ENCODE measurements at regions of chr17 and their contacts with region 1.

Region 1: DNA sequence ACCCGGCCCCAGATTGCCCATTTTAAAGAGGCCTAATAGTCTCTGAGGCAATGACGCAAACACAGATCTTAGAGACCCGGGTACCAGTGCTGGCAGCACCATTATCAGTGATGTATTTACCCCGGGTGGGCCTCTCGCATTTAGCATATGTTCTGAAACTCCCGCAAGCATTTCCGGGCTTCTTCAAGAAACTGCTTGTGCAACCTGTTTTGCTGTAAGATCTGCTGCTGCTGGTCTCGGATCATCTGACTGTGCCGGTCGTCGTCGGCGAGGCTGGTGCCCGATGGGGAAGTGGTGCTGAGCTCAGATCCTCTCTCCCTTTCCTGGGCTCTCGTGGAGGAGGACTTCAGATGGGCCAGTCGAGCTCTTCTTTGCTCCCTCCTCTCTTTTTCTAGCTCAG is 12.5 kb downstream of the CEP295NL start:
- DNase-seq: peak; percentile 46
- ATAC-seq: peak; percentile 60
- H3K4me3 Mint-ChIP-seq: peak overlapping the region; percentile 60
- H3K27ac Mint-ChIP-seq: peak overlapping the region; percentile 94
- H3K4me1 Mint-ChIP-seq: peaks cover 59% of the 10 kb centered on the region
- H3K27me3 Mint-ChIP-seq: no peaks in the 10 kb centered on the region
- CTCF ChIP-seq: no peak

Region 2: GRCh38 chr17:78781948-78782916 is 108.3 kb before region 1 on chr17 and contains the start of gene CYTH1:
- CTCF ChIA-PET with region 1: no interaction called
- POLR2A ChIA-PET with region 1: no interaction called
- intact Hi-C with region 1: loop called (anchors 5 kb)
- DNase-seq: peak; percentile 98
- ATAC-seq: peak; percentile 80
- H3K4me3 Mint-ChIP-seq: peak within 1 kb of the TSS; percentile 92
- H3K27ac Mint-ChIP-seq: peak within 1 kb of the TSS; percentile 93
- H3K4me1 Mint-ChIP-seq: peaks cover 40% of the 10 kb centered on the region
- H3K27me3 Mint-ChIP-seq: no peaks in the 10 kb centered on the region
- CTCF ChIP-seq: no peak
- total RNA-seq, gene CYTH1: 368 and 391 TPM in 2 replicates

Region 3: DNA sequence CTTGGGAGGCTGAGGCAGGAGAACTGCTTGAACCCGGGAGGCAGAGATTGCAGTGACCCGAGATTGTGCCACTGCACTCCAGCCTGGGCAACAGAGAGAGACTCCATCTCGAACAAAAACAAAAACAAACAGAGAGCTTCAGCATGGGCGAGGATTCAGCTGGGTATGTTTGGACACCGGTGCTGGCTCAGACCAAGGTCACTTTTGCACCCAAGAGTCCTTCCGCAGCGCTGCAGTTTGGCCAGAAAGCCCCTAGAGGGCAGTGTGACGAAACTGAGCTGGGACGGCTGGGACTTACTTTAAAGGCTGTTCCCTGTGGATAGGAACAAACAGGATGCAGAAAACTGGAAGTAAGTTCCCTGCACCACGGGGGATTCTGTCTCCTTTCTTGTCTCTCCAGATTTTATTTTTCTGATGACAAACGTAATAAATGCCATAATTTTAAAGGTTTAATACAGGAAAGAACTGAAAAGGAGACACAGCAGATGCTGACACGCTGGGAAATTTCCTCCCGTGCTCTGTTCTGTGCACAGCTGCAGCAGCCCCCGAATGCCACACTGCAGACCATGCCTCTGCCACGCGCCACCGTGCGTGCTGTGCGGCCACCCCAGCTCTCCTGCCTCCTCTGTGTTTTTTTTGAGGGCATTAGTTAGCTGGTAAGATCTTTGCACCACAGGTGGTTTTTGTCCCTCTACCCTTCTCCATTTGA is 24.7 kb before region 1 on chr17:
- CTCF ChIA-PET with region 1: interaction called, 40 read pairs
- POLR2A ChIA-PET with region 1: interaction called, 7 read pairs
- intact Hi-C with region 1: loop called (anchors 1 kb)
- DNase-seq: peak; percentile 66
- ATAC-seq: peak; percentile 81
- H3K4me3 Mint-ChIP-seq: no peak overlapping the region
- H3K27ac Mint-ChIP-seq: no peak overlapping the region
- H3K4me1 Mint-ChIP-seq: peaks cover 3% of the 10 kb centered on the region
- H3K27me3 Mint-ChIP-seq: peaks cover 5% of the 10 kb centered on the region
- CTCF ChIP-seq: peak; percentile 34

Region 4: DNA sequence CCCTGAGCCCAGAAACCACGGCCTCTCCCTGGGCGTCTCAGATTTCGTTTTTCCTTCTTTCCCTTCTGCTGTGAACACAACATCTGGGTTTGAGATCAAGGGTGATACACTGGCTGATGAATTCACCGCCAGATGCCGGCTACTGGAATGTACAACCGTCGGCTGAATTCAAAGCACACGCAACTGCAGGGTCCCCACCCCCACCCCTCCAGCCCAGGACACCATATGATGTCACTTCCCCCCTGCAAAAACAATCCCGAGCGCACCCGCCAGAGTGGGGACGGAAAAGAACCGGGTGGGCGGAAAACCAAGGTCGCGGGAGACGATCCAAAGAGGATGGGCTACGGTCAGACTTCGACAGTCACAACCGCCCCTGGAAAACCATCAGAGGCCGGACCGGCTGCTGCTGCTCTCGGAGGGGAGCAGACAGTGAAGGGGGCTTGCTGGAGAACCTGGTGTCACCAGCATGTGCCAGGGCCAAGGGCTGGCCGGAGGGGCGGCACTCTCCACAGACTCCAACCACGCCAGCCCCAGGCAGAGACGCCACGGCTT is 10.8 kb before region 1 on chr17:
- CTCF ChIA-PET with region 1: no interaction called
- POLR2A ChIA-PET with region 1: interaction called, 8 read pairs
- intact Hi-C with region 1: loop called (anchors 1 kb)
- DNase-seq: no peak
- ATAC-seq: peak; percentile 60
- H3K4me3 Mint-ChIP-seq: peak overlapping the region; percentile 78
- H3K27ac Mint-ChIP-seq: peak overlapping the region; percentile 68
- H3K4me1 Mint-ChIP-seq: peaks cover 32% of the 10 kb centered on the region
- H3K27me3 Mint-ChIP-seq: peaks cover 15% of the 10 kb centered on the region
- CTCF ChIP-seq: no peak

Region 5: DNA sequence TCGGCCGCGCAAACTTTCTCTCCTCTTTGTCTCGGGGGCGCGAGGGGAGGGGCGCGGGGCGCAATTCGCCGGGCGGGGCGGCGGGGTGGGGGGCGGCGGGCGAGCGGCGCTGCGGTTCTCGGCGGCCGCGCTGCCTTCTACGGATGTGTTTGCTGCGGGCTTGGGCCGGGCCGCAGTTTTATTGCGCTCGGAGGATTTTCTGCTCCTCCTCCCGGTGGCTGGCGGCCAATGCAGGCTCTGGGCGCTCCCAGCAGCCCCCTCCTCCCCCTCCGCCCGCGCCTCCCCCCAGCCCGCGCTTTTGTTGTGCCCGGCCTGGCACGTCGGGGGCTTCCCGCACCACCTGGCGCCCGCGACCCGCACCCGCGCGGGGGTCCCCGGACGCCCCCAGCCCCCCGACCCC is 34.7 kb after region 1 on chr17 and contains the start of gene TIMP2:
- CTCF ChIA-PET with region 1: no interaction called
- POLR2A ChIA-PET with region 1: interaction called, 5 read pairs
- intact Hi-C with region 1: loop called (anchors 1 kb)
- DNase-seq: peak; percentile 62
- ATAC-seq: peak; percentile 81
- H3K4me3 Mint-ChIP-seq: peak within 1 kb of the TSS; percentile 86
- H3K27ac Mint-ChIP-seq: no peak within 1 kb of the TSS
- H3K4me1 Mint-ChIP-seq: peaks cover 15% of the 10 kb centered on the region
- H3K27me3 Mint-ChIP-seq: peaks cover 15% of the 10 kb centered on the region
- CTCF ChIP-seq: no peak
- total RNA-seq, gene TIMP2: 3.5 and 4.2 TPM in 2 replicates

Measured in activated B cell treated with CpG ODN at 0.5 μM for 24 hours (primary cell).